Left colon (tissue), 2 donors: ENCODE measurements at regions of chr12 and their contacts with region 1.

Region 1: GRCh38 chr12:123900871-123901376 is 71.7 kb downstream of the CCDC92 start:
- DNase-seq: no peak
- ATAC-seq: no peak

Region 2: DNA sequence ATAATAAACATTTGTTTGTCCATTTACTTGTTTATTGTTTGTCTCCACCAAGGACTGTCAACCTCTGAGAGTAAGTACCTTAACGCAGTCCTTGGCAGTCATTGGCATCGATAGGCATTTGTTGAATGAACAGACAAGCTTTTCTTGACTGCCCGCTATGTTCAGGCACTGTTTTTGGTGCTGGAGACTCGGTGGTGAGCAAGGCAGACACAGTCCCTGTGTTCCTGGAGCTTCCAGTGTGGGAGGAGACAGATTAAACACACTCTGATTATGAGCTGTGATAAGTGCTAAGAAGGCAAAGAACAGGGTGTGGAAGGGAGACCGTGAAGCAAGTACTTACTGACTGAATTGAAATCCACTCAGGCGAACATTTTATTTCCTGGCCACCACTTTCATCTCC is 187.5 kb before region 1 on chr12:
- intact Hi-C with region 1: no loop called
- DNase-seq: peak; percentile 23 to 44
- ATAC-seq: peak; percentile 74

Region 3: GRCh38 chr12:123986374-123986965 is 85.5 kb after region 1 on chr12:
- intact Hi-C with region 1: loop called in 1 of 2 experiments (anchors 5 kb)
- DNase-seq: no peak
- ATAC-seq: no peak